Panc1 (cell line): ENCODE measurements at regions of chr2 and their contacts with region 1.

Region 1: GRCh38 chr2:104938231-104938941 is 84.5 kb downstream of the POU3F3 start:
- DNase-seq: no peak
- ATAC-seq: no peak
- H3K4me3 ChIP-seq: no peak overlapping the region
- H3K27ac ChIP-seq: no peak overlapping the region
- H3K4me1 ChIP-seq: no peaks in the 10 kb centered on the region
- H3K27me3 ChIP-seq: no peaks in the 10 kb centered on the region
- CTCF ChIP-seq: no peak

Region 2: GRCh38 chr2:103025056-103025455 is 1913.3 kb before region 1 on chr2:
- CTCF ChIA-PET with region 1: no interaction called
- POLR2A ChIA-PET with region 1: no interaction called
- in situ Hi-C with region 1: no loop called
- intact Hi-C with region 1: no loop called
- DNase-seq: no peak
- ATAC-seq: no peak
- H3K4me3 ChIP-seq: no peak overlapping the region
- H3K27ac ChIP-seq: no peak overlapping the region
- H3K4me1 ChIP-seq: no peaks in the 10 kb centered on the region
- H3K27me3 ChIP-seq: no peaks in the 10 kb centered on the region
- CTCF ChIP-seq: no peak

Region 3: DNA sequence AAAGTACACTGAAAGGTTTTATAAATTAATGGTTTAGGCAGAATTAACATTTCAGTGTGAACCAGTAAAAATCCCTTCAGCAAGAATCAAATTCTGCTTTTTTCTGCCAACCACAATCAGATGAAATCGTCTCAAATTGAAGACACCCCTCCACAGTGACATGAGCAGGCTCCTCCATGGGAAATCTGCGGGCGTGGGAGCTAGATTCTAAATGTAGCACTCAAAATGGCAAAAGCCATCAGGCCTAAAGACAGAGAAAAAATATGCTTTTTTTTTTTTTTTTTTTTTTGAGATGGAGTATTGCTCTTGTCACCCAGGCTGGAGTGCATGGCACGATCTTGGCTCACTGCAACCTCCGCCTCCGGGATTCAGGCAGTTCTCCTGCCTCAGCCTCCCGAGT is 43.7 kb after region 1 on chr2:
- CTCF ChIA-PET with region 1: no interaction called
- POLR2A ChIA-PET with region 1: interaction called, 17 read pairs
- in situ Hi-C with region 1: no loop called
- intact Hi-C with region 1: no loop called
- DNase-seq: no peak
- ATAC-seq: no peak
- H3K4me3 ChIP-seq: no peak overlapping the region
- H3K27ac ChIP-seq: no peak overlapping the region
- H3K4me1 ChIP-seq: no peaks in the 10 kb centered on the region
- H3K27me3 ChIP-seq: no peaks in the 10 kb centered on the region
- CTCF ChIP-seq: no peak

Region 4: GRCh38 chr2:105005181-105005951 is 67.0 kb after region 1 on chr2:
- CTCF ChIA-PET with region 1: no interaction called
- POLR2A ChIA-PET with region 1: no interaction called
- in situ Hi-C with region 1: no loop called
- intact Hi-C with region 1: no loop called
- DNase-seq: no peak
- ATAC-seq: no peak
- H3K4me3 ChIP-seq: no peak overlapping the region
- H3K27ac ChIP-seq: no peak overlapping the region
- H3K4me1 ChIP-seq: no peaks in the 10 kb centered on the region
- H3K27me3 ChIP-seq: 0 out of 2 replicates have a peak, but pooled peaks cover 2% of the 10 kb centered on the region
- CTCF ChIP-seq: no peak